OCI-LY7 (cell line): ENCODE measurements at regions of chr2 and their contacts with region 1.

Region 1: GRCh38 chr2:74833418-74834233 is at the start of gene HK2:
- DNase-seq: peak; percentile 96
- H3K4me3 ChIP-seq: peak within 1 kb of the TSS; percentile 85
- H3K27ac ChIP-seq: peak within 1 kb of the TSS; percentile 69
- H3K4me1 ChIP-seq: peaks cover 25% of the 10 kb centered on the region
- CTCF ChIP-seq: no peak
- total RNA-seq, gene HK2: 8.6 and 11.8 TPM in 2 replicates

Region 2: DNA sequence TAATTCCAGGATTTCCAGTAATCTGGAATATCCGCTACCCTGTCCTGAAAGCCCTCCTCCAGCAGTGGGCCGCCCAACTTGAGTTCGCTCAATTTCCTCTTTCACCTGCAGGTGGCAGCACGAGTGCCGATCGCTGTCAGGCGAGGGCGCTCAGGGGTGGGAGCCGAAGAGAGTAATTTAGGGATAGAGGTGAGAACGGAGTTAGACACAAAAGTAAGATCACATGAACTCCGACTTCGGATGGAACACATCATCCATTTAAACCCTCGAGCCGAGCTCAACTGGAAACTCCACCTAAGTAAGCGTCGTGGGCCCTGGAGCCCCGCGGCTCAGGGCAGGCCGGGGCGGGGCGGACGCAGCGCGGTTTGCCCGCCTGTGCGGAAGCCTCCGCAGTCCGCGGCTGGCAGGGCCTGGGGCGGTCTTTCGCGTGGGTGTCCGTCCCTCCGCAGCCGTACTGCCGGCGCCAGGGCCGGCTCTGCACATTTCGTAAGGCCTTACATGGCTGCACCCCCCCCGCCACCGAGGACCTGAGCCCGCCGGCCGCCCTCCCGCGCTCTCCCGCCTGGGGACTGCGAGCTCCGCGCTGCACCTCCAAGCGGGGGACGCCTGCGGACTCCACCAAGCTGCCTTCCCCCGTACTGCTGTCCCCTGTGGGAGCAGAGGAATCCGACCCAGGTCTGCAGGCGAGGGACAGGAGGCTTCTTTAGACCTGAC is 118.4 kb before region 1 on chr2:
- CTCF ChIA-PET with region 1: no interaction called
- POLR2A ChIA-PET with region 1: no interaction called
- intact Hi-C with region 1: no loop called
- DNase-seq: peak; percentile 64
- H3K4me3 ChIP-seq: no peak overlapping the region
- H3K27ac ChIP-seq: no peak overlapping the region
- H3K4me1 ChIP-seq: no peaks in the 10 kb centered on the region
- CTCF ChIP-seq: peak; percentile 97

Region 3: DNA sequence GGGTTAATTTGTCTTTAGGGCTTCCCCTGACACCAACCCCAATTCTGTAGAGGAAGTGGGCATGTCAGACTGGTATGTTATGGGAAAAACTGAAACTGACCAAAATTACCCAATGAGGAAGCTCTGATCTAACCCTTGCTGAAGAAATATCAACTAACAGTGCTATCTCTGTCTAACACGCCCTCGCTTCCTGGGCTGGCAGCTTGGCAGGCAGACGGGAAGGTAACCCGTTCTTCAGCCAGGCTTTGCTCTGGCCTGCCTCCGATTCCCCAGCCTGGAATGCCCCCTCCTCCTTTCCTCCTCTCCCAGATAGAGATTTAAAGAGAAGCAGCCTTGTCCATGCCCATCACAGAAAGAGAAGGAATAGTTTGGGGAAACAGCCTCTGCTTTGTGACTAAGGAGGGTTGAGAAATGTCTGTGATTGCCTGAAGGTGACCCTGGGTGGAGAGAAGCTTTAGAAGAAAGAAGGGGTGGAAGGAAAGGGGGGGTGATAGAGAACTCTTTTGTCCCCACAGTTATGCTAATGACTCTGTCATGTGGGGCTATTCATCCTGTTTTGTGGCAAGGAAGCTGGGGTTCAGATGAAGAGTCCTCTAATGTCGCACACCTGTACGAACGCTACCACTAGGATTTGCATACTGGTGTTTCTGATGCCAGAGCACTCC is 15.7 kb after region 1 on chr2:
- CTCF ChIA-PET with region 1: interaction called, 7 read pairs
- POLR2A ChIA-PET with region 1: interaction called, 43 read pairs
- intact Hi-C with region 1: no loop called
- DNase-seq: peak; percentile 80
- H3K4me3 ChIP-seq: peak overlapping the region; percentile 55
- H3K27ac ChIP-seq: peak overlapping the region; percentile 80
- H3K4me1 ChIP-seq: peaks cover 37% of the 10 kb centered on the region
- CTCF ChIP-seq: no peak

Region 4: GRCh38 chr2:74876081-74876886 is 42.7 kb after region 1 on chr2:
- CTCF ChIA-PET with region 1: no interaction called
- POLR2A ChIA-PET with region 1: interaction called, 5 read pairs
- intact Hi-C with region 1: loop called (anchors 1 kb)
- DNase-seq: peak; percentile 67
- H3K4me3 ChIP-seq: no peak overlapping the region
- H3K27ac ChIP-seq: no peak overlapping the region
- H3K4me1 ChIP-seq: no peaks in the 10 kb centered on the region
- CTCF ChIP-seq: peak; percentile 89

Region 5: GRCh38 chr2:74958274-74959105 is 124.9 kb after region 1 on chr2 and contains the start of gene POLE4:
- CTCF ChIA-PET with region 1: no interaction called
- POLR2A ChIA-PET with region 1: interaction called, 4 read pairs
- intact Hi-C with region 1: loop called (anchors 2 kb)
- DNase-seq: peak; percentile 95
- H3K4me3 ChIP-seq: peak within 1 kb of the TSS; percentile 71
- H3K27ac ChIP-seq: peak within 1 kb of the TSS; percentile 79
- H3K4me1 ChIP-seq: peaks cover 18% of the 10 kb centered on the region
- CTCF ChIP-seq: no peak
- total RNA-seq, gene POLE4: 30.6 and 31.7 TPM in 2 replicates

Region 6: GRCh38 chr2:75646583-75647425 is 813.2 kb after region 1 on chr2 and contains the start of gene MRPL19:
- CTCF ChIA-PET with region 1: no interaction called
- POLR2A ChIA-PET with region 1: no interaction called
- intact Hi-C with region 1: loop called (anchors 5 kb)
- DNase-seq: peak; percentile 90
- H3K4me3 ChIP-seq: peak within 1 kb of the TSS; percentile 83
- H3K27ac ChIP-seq: peak within 1 kb of the TSS; percentile 52
- H3K4me1 ChIP-seq: peaks cover 16% of the 10 kb centered on the region
- CTCF ChIP-seq: no peak
- total RNA-seq, gene MRPL19: 41.6 and 42.6 TPM in 2 replicates